Heart left ventricle (tissue), 16 donors: ENCODE measurements at regions of chr11 and their contacts with region 1.

Region 1: DNA sequence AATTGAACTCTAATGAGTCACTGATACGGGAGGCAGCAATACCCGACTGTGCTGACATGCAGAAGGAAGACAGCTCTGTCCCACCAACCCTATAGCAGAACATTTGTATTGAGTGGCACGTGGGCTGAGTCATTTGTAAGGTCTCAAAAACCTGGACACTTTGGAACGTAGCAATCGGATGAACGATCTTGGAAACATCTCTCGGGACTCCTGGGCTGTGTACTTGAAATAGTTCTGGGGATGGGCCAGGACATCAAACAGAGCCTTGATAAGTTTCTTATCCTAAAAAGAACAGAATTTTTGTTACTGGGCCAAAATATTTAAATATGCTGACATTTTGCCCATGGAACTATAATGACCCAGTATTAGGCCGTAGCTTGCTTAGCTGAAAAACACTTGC is 17.1 kb upstream of the NRIP3 start:
- DNase-seq: no peak
- ATAC-seq: no peak
- H3K4me3 ChIP-seq: no peak overlapping the region
- H3K27ac ChIP-seq: no peak overlapping the region
- H3K4me1 ChIP-seq: peaks cover 0 to 31% (median 18%) of the 10 kb centered on the region in 12 donors
- H3K27me3 ChIP-seq: no peaks in the 10 kb centered on the region
- CTCF ChIP-seq: no peak
- POLR2A ChIP-seq: no peak

Region 2: GRCh38 chr11:8878771-8879170 is 142.1 kb before region 1 on chr11:
- intact Hi-C with region 1: no loop called
- DNase-seq: no peak
- ATAC-seq: no peak
- H3K4me3 ChIP-seq: no peak overlapping the region
- H3K27ac ChIP-seq: no peak overlapping the region
- H3K4me1 ChIP-seq: peaks cover 0 to 10% (median 0%) of the 10 kb centered on the region in 12 donors
- H3K27me3 ChIP-seq: no peaks in the 10 kb centered on the region
- CTCF ChIP-seq: no peak
- POLR2A ChIP-seq: no peak

Region 3: DNA sequence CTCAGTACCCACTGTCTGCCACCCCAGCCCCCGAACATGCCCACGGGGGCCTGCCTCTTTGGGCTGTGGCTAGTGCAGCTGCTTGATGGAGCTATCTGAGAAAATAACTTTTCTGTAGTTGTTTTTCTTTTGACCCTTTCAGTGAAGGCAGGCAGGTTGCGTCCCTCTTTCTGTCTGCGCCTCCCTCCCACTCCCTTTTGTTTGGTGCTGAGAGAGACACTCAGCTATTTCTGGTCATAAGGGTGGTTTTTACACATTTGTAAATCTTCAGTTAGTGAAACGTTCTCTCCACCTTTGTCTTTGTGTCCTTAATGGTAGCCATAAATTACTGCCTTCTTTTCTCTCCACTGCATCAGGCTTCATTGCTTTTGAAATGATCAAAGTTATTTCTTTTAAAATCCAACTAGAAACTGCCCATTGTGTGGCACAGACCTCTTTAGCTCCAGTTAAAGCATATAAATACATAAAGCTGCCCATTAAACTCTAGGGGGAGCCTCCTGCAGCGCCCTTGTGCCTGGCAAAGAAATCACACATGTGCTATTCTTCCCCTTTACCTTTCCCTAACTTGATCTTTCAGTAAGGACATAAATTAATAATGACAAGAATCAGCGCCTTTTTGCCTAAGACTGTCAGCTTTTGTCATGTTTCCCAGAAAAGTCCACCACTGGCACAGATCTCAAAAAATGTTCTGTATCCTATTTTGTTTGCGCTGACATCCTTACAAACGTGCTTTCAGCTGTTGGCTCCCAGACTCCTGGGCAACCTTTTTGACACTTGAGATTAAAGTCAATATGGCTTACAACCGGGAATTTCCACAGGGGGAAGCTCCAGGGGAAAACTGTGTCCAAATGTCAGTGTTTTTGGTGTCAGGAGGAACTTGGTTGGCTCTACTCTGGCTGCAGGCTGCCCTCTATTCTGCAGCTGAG is 72.2 kb after region 1 on chr11:
- intact Hi-C with region 1: no loop called
- DNase-seq: no peak
- ATAC-seq: no peak
- H3K4me3 ChIP-seq: no peak overlapping the region
- H3K27ac ChIP-seq: no peak overlapping the region
- H3K4me1 ChIP-seq: peaks cover 0 to 15% (median 0%) of the 10 kb centered on the region in 12 donors
- H3K27me3 ChIP-seq: peaks cover 0 to 44% (median 7%) of the 10 kb centered on the region in 9 donors
- CTCF ChIP-seq: peak in 1 of 12 donors; percentile 4
- POLR2A ChIP-seq: no peak

Region 4: GRCh38 chr11:9130297-9130696 is 109.4 kb after region 1 on chr11:
- intact Hi-C with region 1: loop called in 3 of 10 experiments (anchors 5 kb)
- DNase-seq: no peak
- ATAC-seq: no peak
- H3K4me3 ChIP-seq: no peak overlapping the region
- H3K27ac ChIP-seq: peak overlapping the region in 1 of 12 donors; percentile 10
- H3K4me1 ChIP-seq: peaks cover 0 to 1% (median 0%) of the 10 kb centered on the region in 12 donors
- H3K27me3 ChIP-seq: no peaks in the 10 kb centered on the region
- CTCF ChIP-seq: no peak
- POLR2A ChIP-seq: no peak

Region 5: GRCh38 chr11:9203691-9204311 is 182.9 kb after region 1 on chr11:
- intact Hi-C with region 1: no loop called
- DNase-seq: peak in 1 of 5 donors; percentile 33
- ATAC-seq: peak; percentile 45 to 74 (median 60)
- H3K4me3 ChIP-seq: no peak overlapping the region
- H3K27ac ChIP-seq: no peak overlapping the region
- H3K4me1 ChIP-seq: peaks cover 0 to 82% (median 29%) of the 10 kb centered on the region in 12 donors
- H3K27me3 ChIP-seq: no peaks in the 10 kb centered on the region
- CTCF ChIP-seq: peak in 8 of 12 donors; percentile 21 to 53 (median 36)
- POLR2A ChIP-seq: no peak